ENCODE measurements at regions of chr3 and their contacts with region 1.

Region 1: DNA sequence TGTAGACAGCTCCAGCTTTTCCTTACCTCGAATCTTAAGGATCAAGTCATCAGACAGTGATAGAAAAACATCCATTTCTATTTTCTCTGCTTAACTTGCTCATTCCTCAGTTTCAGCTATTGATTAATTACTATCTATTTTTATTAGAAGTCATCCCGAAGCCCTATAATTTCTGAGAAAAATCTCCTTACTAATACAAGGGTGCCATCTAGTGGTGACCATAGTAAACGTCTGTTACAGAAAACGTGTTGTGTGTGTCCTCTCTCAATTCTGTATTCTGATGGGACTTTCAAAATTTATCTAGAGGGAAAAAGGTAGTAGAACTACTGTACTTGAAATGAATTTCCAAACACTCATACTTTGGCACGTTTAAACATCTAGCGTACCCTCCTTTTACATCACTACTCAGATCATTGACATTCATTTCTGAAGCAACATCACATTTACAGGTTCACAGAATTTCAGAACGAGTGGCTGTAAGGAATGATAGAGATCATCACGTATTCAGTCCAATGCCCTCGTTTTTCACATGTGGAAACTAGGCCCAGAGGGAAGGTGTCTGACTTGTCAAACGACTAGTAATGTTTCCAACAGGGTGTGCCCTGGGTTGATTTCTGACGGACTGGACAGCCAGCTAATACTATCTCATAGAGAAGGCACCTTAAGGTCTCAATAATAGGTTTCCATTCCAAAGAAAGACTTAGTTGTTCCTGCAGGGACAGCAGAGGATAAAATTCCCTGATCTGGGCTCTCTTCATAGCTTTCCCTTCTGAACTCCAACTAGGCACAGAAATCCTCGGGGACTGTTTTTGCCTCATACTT is 25.6 kb downstream of the HACD2 start:
- DNase-seq: peak; percentile 37
- ATAC-seq: no peak
- H3K4me3 Mint-ChIP-seq: no peak overlapping the region
- H3K27ac Mint-ChIP-seq: no peak overlapping the region
- H3K4me1 Mint-ChIP-seq: peaks cover 4% of the 10 kb centered on the region
- H3K27me3 Mint-ChIP-seq: no peaks in the 10 kb centered on the region

Region 2: DNA sequence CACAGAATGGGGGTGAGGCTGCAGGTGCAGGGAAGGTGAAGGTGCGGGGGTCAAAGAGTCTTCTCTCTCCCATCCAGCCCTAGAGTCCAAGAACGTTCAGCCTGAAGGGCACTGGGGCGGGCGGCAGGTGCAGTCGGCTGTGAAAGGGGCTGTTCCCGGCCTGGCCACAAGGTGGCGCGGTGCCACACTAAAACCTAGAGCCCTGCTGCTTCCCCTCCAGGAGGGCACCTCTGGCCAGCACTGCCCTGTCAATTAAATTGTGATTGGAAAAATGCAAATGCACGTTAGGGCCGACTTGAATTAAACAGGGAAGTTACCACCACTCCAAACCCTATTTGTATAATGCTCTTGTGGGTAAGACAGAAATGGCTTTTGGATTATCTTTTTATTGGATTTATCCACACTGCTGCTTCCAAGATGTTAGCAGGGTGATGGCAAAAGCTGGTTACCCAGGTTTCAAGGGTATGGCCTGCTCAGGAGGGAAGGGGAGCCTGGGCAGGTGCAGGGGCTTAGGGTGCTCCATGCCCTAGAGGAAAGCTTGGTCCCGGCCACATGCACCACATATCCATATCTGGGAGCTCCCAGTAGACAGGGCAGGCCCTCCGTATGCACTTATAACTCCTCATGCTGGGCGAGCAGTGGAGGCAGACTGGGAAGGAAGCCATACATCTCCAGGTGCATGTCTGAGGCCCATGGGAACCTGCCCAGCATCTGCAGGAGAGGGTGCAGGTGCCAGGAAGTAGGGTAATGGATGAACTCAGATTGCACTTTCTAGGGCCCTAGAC is 230.2 kb before region 1 on chr3:
- CTCF ChIA-PET with region 1: interaction called, 20 read pairs
- POLR2A ChIA-PET with region 1: no interaction called
- DNase-seq: peak; percentile 81
- ATAC-seq: peak; percentile 85
- H3K4me3 Mint-ChIP-seq: no peak overlapping the region
- H3K27ac Mint-ChIP-seq: no peak overlapping the region
- H3K4me1 Mint-ChIP-seq: no peaks in the 10 kb centered on the region
- H3K27me3 Mint-ChIP-seq: peaks cover 9% of the 10 kb centered on the region

Region 3: GRCh38 chr3:123527046-123527445 is 32.2 kb before region 1 on chr3:
- CTCF ChIA-PET with region 1: interaction called, 13 read pairs
- POLR2A ChIA-PET with region 1: no interaction called
- DNase-seq: no peak
- ATAC-seq: no peak
- H3K4me3 Mint-ChIP-seq: no peak overlapping the region
- H3K27ac Mint-ChIP-seq: no peak overlapping the region
- H3K4me1 Mint-ChIP-seq: peaks cover 26% of the 10 kb centered on the region
- H3K27me3 Mint-ChIP-seq: no peaks in the 10 kb centered on the region

Region 4: DNA sequence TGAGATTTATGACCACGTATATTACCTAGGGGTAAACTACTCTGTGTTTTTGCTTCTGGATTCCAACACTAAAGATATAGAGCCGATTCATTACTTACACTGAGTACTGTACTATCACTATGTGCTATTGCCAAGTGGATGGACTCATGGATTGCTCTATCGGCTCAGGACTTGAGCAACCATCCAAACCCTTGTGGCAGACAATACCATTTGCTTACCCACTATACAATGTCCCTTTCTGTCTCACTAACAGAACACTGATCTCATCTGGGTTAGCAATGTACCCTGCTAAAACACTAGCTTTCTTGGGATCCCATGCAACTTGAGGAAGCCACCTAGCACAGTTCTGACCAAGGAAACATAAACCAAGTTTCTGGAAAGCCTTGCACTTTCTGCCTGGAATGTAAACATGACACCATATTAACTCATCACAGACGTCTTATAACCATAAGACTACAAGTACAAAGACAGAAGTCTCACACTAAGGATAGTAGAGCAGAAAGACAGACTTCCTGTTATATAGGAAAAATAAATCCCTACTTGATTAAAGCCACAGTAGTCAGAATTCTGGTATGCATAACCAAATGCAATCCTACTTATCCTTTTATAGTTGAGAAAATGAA is 13.0 kb before region 1 on chr3:
- CTCF ChIA-PET with region 1: interaction called, 16 read pairs
- POLR2A ChIA-PET with region 1: no interaction called
- DNase-seq: no peak
- ATAC-seq: no peak
- H3K4me3 Mint-ChIP-seq: no peak overlapping the region
- H3K27ac Mint-ChIP-seq: no peak overlapping the region
- H3K4me1 Mint-ChIP-seq: no peaks in the 10 kb centered on the region
- H3K27me3 Mint-ChIP-seq: no peaks in the 10 kb centered on the region

Region 5: DNA sequence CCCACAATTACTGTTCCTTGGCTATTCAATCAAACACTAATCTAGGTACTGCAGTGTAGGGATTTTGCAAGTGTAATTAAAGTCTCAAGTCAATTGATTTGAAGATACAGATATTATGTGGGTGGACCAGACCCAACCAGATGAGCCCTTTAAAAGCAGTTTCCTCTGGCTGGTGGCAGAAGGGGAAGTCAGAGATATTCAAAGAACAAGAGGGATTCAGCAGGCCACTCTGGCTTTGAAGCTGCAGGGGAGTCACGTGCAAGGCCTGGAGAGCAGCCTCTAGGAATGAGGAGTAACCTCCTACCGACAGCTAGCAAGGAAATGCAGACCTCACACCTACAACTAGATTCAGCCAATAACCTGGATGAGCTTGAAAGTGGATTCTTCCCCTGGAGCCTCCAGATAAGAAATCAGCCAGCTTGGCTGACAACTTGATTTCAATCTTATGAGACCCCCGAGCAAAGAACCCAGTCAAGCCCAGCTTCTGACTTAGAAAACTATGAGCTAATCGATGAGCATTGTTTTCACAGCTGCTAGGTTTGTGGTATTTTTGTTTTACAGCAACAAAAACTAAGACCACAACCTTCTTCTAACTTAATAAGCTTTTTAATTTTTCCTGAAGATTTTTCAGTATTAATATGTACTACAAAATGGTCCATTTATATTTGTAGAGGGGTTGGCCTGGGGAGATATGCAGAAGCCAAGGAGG is 12.2 kb after region 1 on chr3:
- CTCF ChIA-PET with region 1: interaction called, 19 read pairs
- POLR2A ChIA-PET with region 1: no interaction called
- DNase-seq: no peak
- ATAC-seq: no peak
- H3K4me3 Mint-ChIP-seq: no peak overlapping the region
- H3K27ac Mint-ChIP-seq: no peak overlapping the region
- H3K4me1 Mint-ChIP-seq: peaks cover 8% of the 10 kb centered on the region
- H3K27me3 Mint-ChIP-seq: no peaks in the 10 kb centered on the region

Measured in activated CD8-positive, alpha-beta T cell treated with anti-CD3 and anti-CD28 coated beads, Interleukin-2, amount 10 ng/mL, durations not matched to agents 7 days and 5 days (primary cell).